ENCODE measurements at regions of chr1 and their contacts with region 1.

Region 1: GRCh38 chr1:161098210-161099068 is at the start of gene KLHDC9:
- DNase-seq: peak; percentile 59 to 83
- ATAC-seq: peak; percentile 57 to 80 (median 71)
- H3K4me3 ChIP-seq: peak within 1 kb of the TSS; percentile 47
- H3K4me3 Mint-ChIP-seq: peak within 1 kb of the TSS; percentile 97
- H3K27ac ChIP-seq: peak within 1 kb of the TSS; percentile 49
- H3K27ac Mint-ChIP-seq: peak within 1 kb of the TSS; percentile 97 to 100
- H3K4me1 ChIP-seq: peaks cover 21% of the 10 kb centered on the region
- H3K4me1 Mint-ChIP-seq: peaks cover 22% of the 10 kb centered on the region in 2 donors
- H3K27me3 ChIP-seq: no peaks in the 10 kb centered on the region
- H3K27me3 Mint-ChIP-seq: peaks cover 0 to 11% of the 10 kb centered on the region in 2 donors
- CTCF ChIP-seq: no peak
- total RNA-seq, gene KLHDC9: 0.49 to 0.50 TPM in 2 of 3 donors, not detected in the other

Region 2: GRCh38 chr1:160768295-160768657 is 330.2 kb before region 1 on chr1:
- intact Hi-C with region 1: loop called (anchors 5 kb)
- DNase-seq: peak; percentile 77 to 95
- ATAC-seq: peak; percentile 88 to 98 (median 96)
- H3K4me3 ChIP-seq: peak overlapping the region; percentile 9
- H3K4me3 Mint-ChIP-seq: peak overlapping the region; percentile 97
- H3K27ac ChIP-seq: peak overlapping the region; percentile 83
- H3K27ac Mint-ChIP-seq: peak overlapping the region; percentile 98 to 99
- H3K4me1 ChIP-seq: peaks cover 17% of the 10 kb centered on the region
- H3K4me1 Mint-ChIP-seq: peaks cover 23 to 24% of the 10 kb centered on the region in 2 donors
- H3K27me3 ChIP-seq: no peaks in the 10 kb centered on the region
- H3K27me3 Mint-ChIP-seq: no peaks in the 10 kb centered on the region
- CTCF ChIP-seq: peak; percentile 91

Region 3: DNA sequence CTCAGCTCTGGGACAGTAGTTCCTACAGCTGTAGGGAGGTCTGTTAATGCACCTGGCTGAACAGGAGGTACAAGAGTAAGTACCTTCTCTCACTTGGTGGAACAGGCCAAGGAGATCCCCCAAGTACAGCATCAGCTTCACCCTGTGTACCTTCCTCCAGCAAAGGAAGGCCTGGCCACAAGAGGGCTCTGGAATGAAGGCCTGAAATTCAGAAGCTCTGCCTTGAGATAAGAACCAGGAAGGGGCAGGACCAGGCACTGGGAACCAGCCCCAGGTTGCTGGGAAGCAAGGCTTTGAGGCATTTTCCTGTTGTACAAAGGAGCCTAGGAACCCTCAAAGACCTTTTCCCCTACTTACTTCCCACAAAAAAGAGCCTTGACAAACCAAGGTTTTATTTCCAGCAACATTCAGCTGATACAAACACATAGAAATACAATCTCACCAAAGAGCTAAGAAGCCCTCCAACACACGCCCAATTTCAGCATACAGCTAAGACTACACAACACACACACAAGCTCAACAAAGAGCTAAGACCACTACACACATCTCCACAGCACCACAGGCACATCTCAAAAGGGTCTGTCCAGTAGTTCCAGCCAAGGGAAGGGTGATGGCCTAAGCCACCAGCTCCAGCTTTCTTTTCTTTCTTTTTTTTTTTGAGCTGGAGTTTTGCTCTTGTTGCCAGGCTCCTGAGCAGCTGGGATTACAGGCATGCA is 101.0 kb before region 1 on chr1:
- intact Hi-C with region 1: loop called (anchors 5 kb)
- DNase-seq: peak in 1 of 2 donors; percentile 71
- ATAC-seq: peak; percentile 56 to 70 (median 68)
- H3K4me3 ChIP-seq: no peak overlapping the region
- H3K4me3 Mint-ChIP-seq: no peak overlapping the region
- H3K27ac ChIP-seq: no peak overlapping the region
- H3K27ac Mint-ChIP-seq: peak overlapping the region in 1 of 2 donors; percentile 45
- H3K4me1 ChIP-seq: no peaks in the 10 kb centered on the region
- H3K4me1 Mint-ChIP-seq: peaks cover 0 to 6% of the 10 kb centered on the region in 2 donors
- H3K27me3 ChIP-seq: no peaks in the 10 kb centered on the region
- H3K27me3 Mint-ChIP-seq: no peaks in the 10 kb centered on the region
- CTCF ChIP-seq: no peak

Region 4: DNA sequence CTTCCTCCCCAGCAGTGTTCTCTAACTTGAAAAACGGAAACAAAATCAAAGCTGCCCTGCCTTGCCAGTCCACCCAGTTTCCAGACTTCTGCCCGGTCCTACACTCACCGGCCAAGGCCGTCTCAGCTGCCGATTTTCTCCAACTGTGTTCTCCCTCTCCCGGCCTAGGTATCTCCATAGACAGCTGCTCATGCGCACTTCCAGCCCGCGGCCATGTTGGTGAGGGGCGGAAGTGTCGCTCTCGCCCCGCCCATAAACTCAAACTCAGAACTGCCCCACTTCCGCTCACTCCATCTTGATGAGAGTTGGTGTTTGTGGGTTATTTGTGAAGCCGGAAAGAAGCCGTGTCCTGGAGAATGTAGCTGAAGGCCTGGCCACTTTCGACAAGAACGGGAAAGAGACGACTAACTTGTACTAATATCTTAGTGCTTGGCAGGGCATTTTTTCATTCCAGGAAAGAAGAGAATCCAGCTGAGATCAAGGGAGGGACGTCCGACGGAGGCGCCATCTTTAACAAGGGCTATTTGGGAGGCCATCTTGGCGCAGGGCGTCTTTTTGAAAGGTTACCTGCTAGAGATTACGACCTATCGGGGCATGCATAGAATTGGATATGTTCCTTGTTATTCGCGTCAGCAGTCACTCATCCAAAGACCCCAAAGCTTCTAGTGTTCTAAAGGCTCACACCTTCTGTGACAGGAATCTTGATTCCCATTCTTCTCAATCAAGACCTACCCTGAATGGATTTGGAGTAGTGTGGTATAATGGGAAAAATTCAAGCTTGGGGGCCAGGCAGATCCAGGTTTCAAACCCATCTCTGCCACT is 52.5 kb before region 1 on chr1 and contains the start of gene USF1:
- intact Hi-C with region 1: loop called (anchors 1 kb)
- DNase-seq: peak; percentile 93 to 98
- ATAC-seq: peak; percentile 79 to 92 (median 87)
- H3K4me3 ChIP-seq: peak within 1 kb of the TSS; percentile 90
- H3K4me3 Mint-ChIP-seq: peak within 1 kb of the TSS; percentile 97
- H3K27ac ChIP-seq: peak within 1 kb of the TSS; percentile 88
- H3K27ac Mint-ChIP-seq: peak within 1 kb of the TSS; percentile 98 to 99
- H3K4me1 ChIP-seq: peaks cover 35% of the 10 kb centered on the region
- H3K4me1 Mint-ChIP-seq: peaks cover 37 to 72% of the 10 kb centered on the region in 2 donors
- H3K27me3 ChIP-seq: no peaks in the 10 kb centered on the region
- H3K27me3 Mint-ChIP-seq: no peaks in the 10 kb centered on the region
- CTCF ChIP-seq: no peak
- total RNA-seq, gene USF1: 113 to 121 (median 114) TPM

Region 5: GRCh38 chr1:161071886-161072371 is 26.5 kb before region 1 on chr1:
- intact Hi-C with region 1: loop called (anchors 1 kb)
- DNase-seq: peak; percentile 51 to 73
- ATAC-seq: peak in 2 of 3 donors; percentile 10 to 18
- H3K4me3 ChIP-seq: no peak overlapping the region
- H3K4me3 Mint-ChIP-seq: peak overlapping the region; percentile 40
- H3K27ac ChIP-seq: peak overlapping the region; percentile 40
- H3K27ac Mint-ChIP-seq: peak overlapping the region; percentile 89
- H3K4me1 ChIP-seq: peaks cover 41% of the 10 kb centered on the region
- H3K4me1 Mint-ChIP-seq: peaks cover 45 to 69% of the 10 kb centered on the region in 2 donors
- H3K27me3 ChIP-seq: no peaks in the 10 kb centered on the region
- H3K27me3 Mint-ChIP-seq: no peaks in the 10 kb centered on the region
- CTCF ChIP-seq: peak; percentile 76